Naive thymus-derived CD4-positive, alpha-beta T cell (primary cell): ENCODE measurements at regions of chr1 and their contacts with region 1.

Region 1: DNA sequence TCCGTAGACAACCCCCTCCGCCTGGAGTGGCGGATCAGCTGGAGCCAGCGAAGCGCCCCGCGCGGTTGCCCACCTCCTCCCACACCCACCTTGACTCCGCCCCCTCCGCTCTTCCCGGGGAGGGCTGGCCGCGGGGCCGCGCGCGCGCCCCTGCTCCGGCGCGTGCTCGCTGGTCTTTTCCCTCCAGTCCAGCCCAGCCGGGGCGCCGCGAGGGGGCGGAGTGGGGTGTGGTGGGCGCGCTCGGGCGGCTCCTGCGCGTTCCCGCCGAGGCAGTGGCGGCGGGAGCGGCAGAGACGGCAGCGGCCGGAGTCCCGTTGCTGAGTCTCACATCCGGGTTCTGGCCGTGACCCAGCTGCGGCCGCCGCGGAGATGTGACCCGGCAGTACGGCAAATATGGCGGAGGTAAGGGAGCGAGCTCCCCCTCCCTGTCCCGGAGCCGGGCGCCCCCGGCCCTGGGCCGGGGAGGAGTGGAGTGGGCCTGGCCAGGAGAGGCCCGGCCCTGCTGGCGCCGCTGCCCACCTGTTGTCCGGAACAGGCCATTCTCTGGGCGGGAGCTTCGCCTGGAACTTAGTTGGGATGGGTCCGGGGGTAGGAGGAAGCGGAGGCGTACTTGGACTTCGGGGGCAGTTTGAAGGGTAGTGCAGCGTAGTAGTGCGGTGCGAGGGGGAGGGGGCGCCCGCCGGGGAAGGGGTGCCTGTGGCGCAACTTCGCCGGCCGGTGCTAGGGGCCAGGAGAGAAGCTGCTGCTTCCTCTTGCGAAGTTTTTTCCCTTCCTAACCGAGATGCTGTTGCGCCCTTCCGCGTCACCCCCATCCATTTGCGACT is 5.4 kb downstream of the MIER1 start:
- DNase-seq: peak; percentile 88 to 97 (median 92)
- ATAC-seq: peak; percentile 88
- H3K4me3 ChIP-seq: peak overlapping the region; percentile 69
- H3K4me3 Mint-ChIP-seq: peak overlapping the region; percentile 85 to 98 (median 92)
- H3K27ac ChIP-seq: peak overlapping the region; percentile 91
- H3K27ac Mint-ChIP-seq: peak overlapping the region; percentile 79 to 95 (median 90)
- H3K4me1 ChIP-seq: peaks cover 45 to 48% of the 10 kb centered on the region in 2 donors
- H3K4me1 Mint-ChIP-seq: peaks cover 38 to 88% (median 70%) of the 10 kb centered on the region in 7 donors
- H3K27me3 ChIP-seq: no peaks in the 10 kb centered on the region
- H3K27me3 Mint-ChIP-seq: no peaks in the 10 kb centered on the region

Region 2: DNA sequence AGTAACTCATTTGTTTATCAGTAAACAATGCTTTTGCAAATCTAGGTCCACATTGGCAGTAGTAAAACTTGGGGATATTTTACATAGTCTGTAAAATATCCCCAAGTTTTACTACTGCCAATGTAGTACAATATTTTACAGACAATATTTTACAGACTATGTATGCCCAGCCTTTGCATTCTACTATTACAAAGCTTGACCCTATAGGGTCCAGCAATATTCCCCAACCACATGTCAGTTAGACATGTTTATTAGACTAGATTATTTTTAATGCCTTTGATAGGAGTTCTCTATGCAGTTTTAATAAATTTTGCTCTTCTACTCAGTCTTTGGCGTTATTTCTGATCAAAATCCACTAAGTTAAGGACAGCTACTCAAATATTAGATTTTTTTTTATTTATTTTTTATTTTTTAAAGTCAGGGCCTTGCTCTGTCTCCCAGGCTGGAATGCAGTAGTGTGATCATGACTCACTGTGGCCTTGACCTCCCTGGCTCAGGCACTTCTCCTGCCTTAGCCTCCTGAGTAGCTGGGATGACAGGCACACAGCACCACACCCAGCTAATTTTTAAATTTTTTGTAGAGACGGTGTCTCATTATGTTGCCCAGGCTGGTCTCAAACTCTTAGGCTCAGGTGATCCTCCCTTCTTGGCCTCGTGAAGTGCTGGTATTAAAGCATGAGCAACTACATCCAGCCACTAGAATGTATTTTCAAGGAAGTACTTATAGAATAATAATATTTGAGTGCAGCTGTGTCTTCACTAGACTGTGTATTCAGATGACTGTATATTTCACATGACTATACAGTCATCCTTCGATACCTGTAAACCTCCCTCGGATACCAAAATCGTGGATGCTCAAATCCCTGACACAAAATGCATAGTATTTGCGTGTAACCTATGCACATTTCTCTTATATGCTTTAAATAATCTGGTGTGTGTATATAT is 14.4 kb after region 1 on chr1:
- CTCF ChIA-PET with region 1: no interaction called
- POLR2A ChIA-PET with region 1: interaction called, 6 read pairs
- intact Hi-C with region 1: loop called (anchors 1 to 2 kb)
- DNase-seq: no peak
- ATAC-seq: no peak
- H3K4me3 ChIP-seq: no peak overlapping the region
- H3K4me3 Mint-ChIP-seq: no peak overlapping the region
- H3K27ac ChIP-seq: no peak overlapping the region
- H3K27ac Mint-ChIP-seq: peak overlapping the region in 1 of 9 donors; percentile 28
- H3K4me1 ChIP-seq: peaks cover 20 to 30% of the 10 kb centered on the region in 2 donors
- H3K4me1 Mint-ChIP-seq: peaks cover 35 to 84% (median 71%) of the 10 kb centered on the region in 7 donors
- H3K27me3 ChIP-seq: no peaks in the 10 kb centered on the region
- H3K27me3 Mint-ChIP-seq: no peaks in the 10 kb centered on the region